CD4-positive, alpha-beta T cell (primary cell): ENCODE measurements at regions of chr7 and their contacts with region 1.

Region 1: DNA sequence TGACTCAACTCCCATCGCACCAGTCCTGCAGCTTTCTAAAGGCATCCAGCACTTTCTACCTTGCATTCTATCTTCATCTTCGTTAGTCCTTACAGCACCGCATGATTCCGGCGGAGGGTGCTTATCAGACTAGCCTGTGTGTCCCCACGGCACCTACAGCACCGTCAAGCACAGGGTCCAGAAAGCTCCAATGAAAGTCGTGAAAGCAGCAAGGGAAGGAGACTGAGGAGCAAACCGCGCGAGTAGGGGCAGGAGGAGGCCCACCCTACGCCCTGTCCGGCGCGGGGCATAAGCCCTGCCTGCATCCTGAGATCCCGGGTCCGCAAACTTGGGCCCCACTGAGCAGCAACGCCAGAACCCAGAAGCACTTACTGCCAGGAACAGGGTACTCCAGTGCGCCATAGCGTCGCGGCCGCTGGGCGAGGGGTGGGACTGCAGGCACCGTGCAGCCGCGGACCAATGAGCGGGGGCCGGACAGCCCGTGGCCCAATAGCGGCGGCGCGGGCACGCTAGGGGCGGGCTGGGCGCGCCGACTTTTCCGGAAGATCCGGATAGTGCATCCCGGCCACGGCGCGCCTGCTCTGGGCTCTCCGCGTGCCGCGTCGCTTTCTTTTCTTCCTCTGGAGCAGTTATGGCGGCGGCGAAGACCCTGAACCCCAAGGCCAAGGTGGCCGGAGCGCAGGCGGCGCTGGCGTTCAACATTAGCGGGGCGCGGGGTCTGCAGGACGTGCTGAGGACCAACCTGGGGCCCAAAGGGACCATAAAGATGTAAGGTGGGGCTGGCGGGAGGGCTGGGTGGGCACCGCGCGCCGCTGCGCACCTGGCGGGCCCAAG is 122.1 kb upstream of the VKORC1L1 start:
- DNase-seq: peak; percentile 70 to 92 (median 84)
- ATAC-seq: peak; percentile 96
- H3K4me3 ChIP-seq: peak overlapping the region; percentile 98
- H3K4me3 Mint-ChIP-seq: peak overlapping the region; percentile 99
- H3K27ac ChIP-seq: peak overlapping the region; percentile 56 to 69
- H3K27ac Mint-ChIP-seq: peak overlapping the region; percentile 96
- H3K4me1 ChIP-seq: peaks cover 25% of the 10 kb centered on the region
- H3K4me1 Mint-ChIP-seq: peaks cover 33% of the 10 kb centered on the region
- H3K27me3 ChIP-seq: no peaks in the 10 kb centered on the region
- H3K27me3 Mint-ChIP-seq: no peaks in the 10 kb centered on the region
- CTCF ChIP-seq: no peak

Region 2: GRCh38 chr7:65448816-65449504 is 301.8 kb before region 1 on chr7:
- CTCF ChIA-PET with region 1: no interaction called
- POLR2A ChIA-PET with region 1: no interaction called
- intact Hi-C with region 1: no loop called
- DNase-seq: no peak
- ATAC-seq: no peak
- H3K4me3 ChIP-seq: no peak overlapping the region
- H3K4me3 Mint-ChIP-seq: no peak overlapping the region
- H3K27ac ChIP-seq: no peak overlapping the region
- H3K27ac Mint-ChIP-seq: no peak overlapping the region
- H3K4me1 ChIP-seq: peaks cover 7% of the 10 kb centered on the region
- H3K4me1 Mint-ChIP-seq: peaks cover 5% of the 10 kb centered on the region
- H3K27me3 ChIP-seq: peaks cover 0 to 5% of the 10 kb centered on the region in 2 experiments
- H3K27me3 Mint-ChIP-seq: peaks cover 18% of the 10 kb centered on the region
- CTCF ChIP-seq: no peak

Region 3: DNA sequence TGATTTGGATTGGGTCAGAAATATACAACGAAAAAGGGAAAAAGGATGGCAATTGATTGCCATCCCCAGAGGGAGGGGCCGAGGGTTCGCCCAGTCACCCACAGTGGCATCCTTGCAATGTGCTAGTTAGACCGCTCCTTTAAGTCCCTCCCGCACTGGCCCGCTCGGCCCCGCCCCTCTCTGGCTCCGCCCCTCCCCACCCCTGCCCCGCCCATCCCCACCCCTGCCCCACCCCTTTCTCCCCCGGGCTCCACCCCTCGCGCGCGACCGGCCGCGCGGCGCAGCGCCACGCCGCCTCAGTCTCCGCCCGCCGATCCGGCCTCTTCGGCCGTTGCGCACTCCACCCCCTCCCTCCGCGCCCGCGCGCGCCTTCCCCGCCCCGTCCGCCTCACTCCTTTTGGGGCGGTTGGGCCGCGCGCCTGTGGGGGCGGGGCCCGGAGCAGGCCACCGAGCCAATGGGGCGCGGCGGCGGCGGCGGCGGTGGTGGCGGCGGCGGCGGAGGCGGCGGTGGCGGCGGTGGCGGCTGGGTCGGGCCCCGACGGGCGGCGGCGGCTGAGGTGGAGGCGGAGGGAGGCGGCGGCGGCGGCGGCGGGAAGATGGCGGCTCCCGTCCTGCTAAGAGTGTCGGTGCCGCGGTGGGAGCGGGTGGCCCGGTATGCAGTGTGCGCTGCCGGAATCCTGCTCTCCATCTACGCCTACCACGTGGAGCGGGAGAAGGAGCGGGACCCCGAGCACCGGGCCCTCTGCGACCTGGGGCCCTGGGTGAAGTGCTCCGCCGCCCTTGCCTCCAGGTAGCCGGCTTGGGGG is 122.3 kb after region 1 on chr7 and contains the start of gene VKORC1L1:
- CTCF ChIA-PET with region 1: no interaction called
- POLR2A ChIA-PET with region 1: no interaction called
- intact Hi-C with region 1: loop called in 1 of 2 experiments (anchors 5 kb)
- DNase-seq: peak; percentile 89 to 97 (median 96)
- ATAC-seq: peak; percentile 87
- H3K4me3 ChIP-seq: peak within 1 kb of the TSS; percentile 68
- H3K4me3 Mint-ChIP-seq: peak within 1 kb of the TSS; percentile 91
- H3K27ac ChIP-seq: no peak within 1 kb of the TSS
- H3K27ac Mint-ChIP-seq: peak within 1 kb of the TSS; percentile 80
- H3K4me1 ChIP-seq: peaks cover 13% of the 10 kb centered on the region
- H3K4me1 Mint-ChIP-seq: peaks cover 12% of the 10 kb centered on the region
- H3K27me3 ChIP-seq: no peaks in the 10 kb centered on the region
- H3K27me3 Mint-ChIP-seq: no peaks in the 10 kb centered on the region
- CTCF ChIP-seq: no peak
- total RNA-seq, gene VKORC1L1: 1.9 to 3.0 TPM

Region 4: GRCh38 chr7:66043681-66044497 is 293.2 kb after region 1 on chr7:
- CTCF ChIA-PET with region 1: no interaction called
- POLR2A ChIA-PET with region 1: no interaction called
- intact Hi-C with region 1: no loop called
- DNase-seq: peak in 11 of 14 experiments; percentile 3 to 51 (median 11)
- ATAC-seq: peak; percentile 62
- H3K4me3 ChIP-seq: peak overlapping the region; percentile 53
- H3K4me3 Mint-ChIP-seq: peak overlapping the region; percentile 75
- H3K27ac ChIP-seq: no peak overlapping the region
- H3K27ac Mint-ChIP-seq: no peak overlapping the region
- H3K4me1 ChIP-seq: peaks cover 8% of the 10 kb centered on the region
- H3K4me1 Mint-ChIP-seq: no peaks in the 10 kb centered on the region
- H3K27me3 ChIP-seq: peaks cover 0 to 11% of the 10 kb centered on the region in 2 experiments
- H3K27me3 Mint-ChIP-seq: peaks cover 26% of the 10 kb centered on the region
- CTCF ChIP-seq: no peak

Region 5: DNA sequence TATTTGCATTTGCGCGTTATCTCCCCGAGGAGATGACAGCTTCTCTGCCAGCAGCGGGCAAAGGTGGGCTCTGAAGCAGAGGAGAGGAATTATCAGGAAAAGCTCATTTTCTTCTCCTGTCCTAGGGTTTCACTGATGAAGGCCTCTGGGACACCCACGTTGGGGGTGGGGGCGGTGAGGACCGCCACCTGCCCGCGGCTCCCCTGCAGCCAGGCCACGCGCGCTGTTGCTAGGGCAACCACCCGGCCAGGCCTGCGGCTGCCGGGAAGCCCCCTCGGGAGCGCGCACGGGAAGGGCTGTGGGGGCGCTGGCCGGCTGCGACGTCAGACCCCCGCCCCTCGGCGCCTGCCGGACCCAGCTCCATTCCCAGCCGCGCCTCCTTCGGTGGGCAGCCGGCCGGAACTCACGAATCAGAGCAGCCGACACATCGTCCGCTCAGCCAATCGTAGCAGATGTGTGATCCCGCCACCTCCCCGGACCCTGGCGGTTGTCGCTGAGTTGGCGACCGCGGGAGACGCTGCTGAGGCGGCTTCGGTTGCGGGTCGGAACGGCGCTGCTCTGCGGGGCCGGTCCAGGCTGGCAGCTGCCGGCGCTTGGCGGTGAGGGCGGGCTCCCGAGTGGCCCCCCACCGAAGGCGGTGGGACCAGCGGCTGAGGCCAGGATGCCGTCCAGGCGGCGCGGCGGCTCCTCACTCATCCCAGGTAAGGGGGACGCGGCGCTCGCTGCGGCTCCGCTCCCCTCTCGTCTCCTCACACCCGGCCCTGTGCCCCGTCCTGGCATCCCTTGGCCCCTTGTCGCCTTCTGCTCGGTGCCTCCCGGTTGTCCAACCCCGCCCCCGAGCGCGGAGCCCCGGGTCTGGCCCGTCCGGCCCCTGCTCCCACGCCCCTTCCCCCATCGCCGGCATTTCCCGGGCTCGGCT is 454.4 kb after region 1 on chr7 and contains the start of gene TPST1:
- CTCF ChIA-PET with region 1: no interaction called
- POLR2A ChIA-PET with region 1: no interaction called
- intact Hi-C with region 1: loop called in 1 of 2 experiments (anchors 10 kb)
- DNase-seq: peak; percentile 60 to 88 (median 70)
- ATAC-seq: peak; percentile 94
- H3K4me3 ChIP-seq: peak within 1 kb of the TSS; percentile 56
- H3K4me3 Mint-ChIP-seq: peak within 1 kb of the TSS; percentile 92
- H3K27ac ChIP-seq: no peak within 1 kb of the TSS
- H3K27ac Mint-ChIP-seq: peak within 1 kb of the TSS; percentile 58
- H3K4me1 ChIP-seq: peaks cover 24% of the 10 kb centered on the region
- H3K4me1 Mint-ChIP-seq: peaks cover 39% of the 10 kb centered on the region
- H3K27me3 ChIP-seq: peaks cover 8 to 10% of the 10 kb centered on the region in 2 experiments
- H3K27me3 Mint-ChIP-seq: peaks cover 18% of the 10 kb centered on the region
- CTCF ChIP-seq: peak; percentile 54
- total RNA-seq, gene TPST1: 1.9 to 2.6 TPM